ENCODE measurements at regions of chr1 and their contacts with region 1.

Region 1: GRCh38 chr1:13748610-13749505 is 48.9 kb downstream of the PRDM2 start:
- H3K4me3 ChIP-seq: peak overlapping the region; percentile 91
- H3K27ac ChIP-seq: peak overlapping the region; percentile 83; the same call in 1 of the 2 replicates
- H3K4me1 ChIP-seq: peaks cover 12% of the 10 kb centered on the region
- CTCF ChIP-seq: no peak

Region 2: GRCh38 chr1:13707164-13707563 is 41.7 kb before region 1 on chr1:
- CTCF ChIA-PET with region 1: no interaction called
- POLR2A ChIA-PET with region 1: interaction called, 10 read pairs
- H3K4me3 ChIP-seq: no peak overlapping the region
- H3K27ac ChIP-seq: no peak overlapping the region
- H3K4me1 ChIP-seq: peaks cover 7% of the 10 kb centered on the region; the same call in 1 of the 2 replicates
- CTCF ChIP-seq: no peak

Region 3: GRCh38 chr1:13737398-13737797 is 11.5 kb before region 1 on chr1:
- CTCF ChIA-PET with region 1: interaction called, 4 read pairs
- POLR2A ChIA-PET with region 1: interaction called, 11 read pairs
- H3K4me3 ChIP-seq: no peak overlapping the region
- H3K27ac ChIP-seq: no peak overlapping the region
- H3K4me1 ChIP-seq: no peaks in the 10 kb centered on the region
- CTCF ChIP-seq: no peak

Region 4: DNA sequence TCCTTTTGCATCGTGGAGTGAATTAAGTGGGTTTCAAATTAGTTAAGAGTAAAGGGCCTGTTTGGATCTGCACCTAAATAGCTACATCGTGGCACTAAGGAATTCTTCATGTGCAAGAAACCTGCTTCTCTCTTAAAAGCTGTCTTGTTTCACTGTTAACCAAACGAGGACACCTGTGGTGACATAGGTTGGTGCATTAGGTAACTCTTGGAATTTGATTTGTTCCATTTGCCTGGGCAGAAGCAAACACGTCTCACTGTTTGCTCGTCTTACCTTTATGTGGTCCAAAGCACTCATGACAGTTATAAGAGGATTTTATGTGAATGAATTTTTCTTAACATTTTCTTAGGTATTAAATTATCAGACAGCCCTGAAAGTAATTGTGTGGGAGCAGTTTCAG is 12.1 kb after region 1 on chr1:
- CTCF ChIA-PET with region 1: interaction called, 5 read pairs
- POLR2A ChIA-PET with region 1: interaction called, 13 read pairs
- H3K4me3 ChIP-seq: no peak overlapping the region
- H3K27ac ChIP-seq: no peak overlapping the region
- H3K4me1 ChIP-seq: peaks cover 35% of the 10 kb centered on the region
- CTCF ChIP-seq: no peak